Aorta (tissue), 5 donors: ENCODE measurements at regions of chr9 and their contacts with region 1.

Region 1: DNA sequence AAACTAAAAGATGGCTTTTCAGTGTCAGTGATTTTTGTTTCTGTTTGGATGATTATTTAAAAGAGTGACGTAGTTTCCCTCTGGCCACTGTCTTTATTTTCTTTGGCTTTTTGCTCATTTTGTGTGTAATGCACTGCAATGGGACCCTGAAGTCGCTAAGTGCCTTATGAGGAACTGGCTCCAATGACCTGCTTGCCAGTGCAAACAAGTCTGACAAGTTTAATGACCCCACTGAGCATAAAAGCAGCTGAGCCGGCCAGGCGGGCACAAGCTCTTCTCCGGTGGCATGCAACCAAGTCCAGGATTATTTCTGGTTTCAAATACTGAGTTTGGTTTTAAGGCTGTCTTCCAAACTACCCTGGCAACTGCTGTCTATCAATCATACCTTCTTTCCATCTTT is 15.6 kb upstream of the GNA14 start:
- DNase-seq: peak in 1 of 2 donors; percentile 59
- ATAC-seq: peak; percentile 85
- H3K4me3 ChIP-seq: no peak overlapping the region
- H3K27ac ChIP-seq: peak overlapping the region in 1 of 2 donors; percentile 34
- H3K4me1 ChIP-seq: peaks cover 0 to 5% of the 10 kb centered on the region in 2 donors
- H3K27me3 ChIP-seq: no peaks in the 10 kb centered on the region

Region 2: GRCh38 chr9:77712533-77713130 is 48.9 kb after region 1 on chr9:
- intact Hi-C with region 1: loop called in 1 of 2 experiments (anchors 5 kb)
- DNase-seq: no peak
- ATAC-seq: no peak
- H3K4me3 ChIP-seq: no peak overlapping the region
- H3K27ac ChIP-seq: peak overlapping the region in 1 of 2 donors; percentile 4
- H3K4me1 ChIP-seq: peaks cover 0 to 3% of the 10 kb centered on the region in 2 donors
- H3K27me3 ChIP-seq: no peaks in the 10 kb centered on the region

Region 3: DNA sequence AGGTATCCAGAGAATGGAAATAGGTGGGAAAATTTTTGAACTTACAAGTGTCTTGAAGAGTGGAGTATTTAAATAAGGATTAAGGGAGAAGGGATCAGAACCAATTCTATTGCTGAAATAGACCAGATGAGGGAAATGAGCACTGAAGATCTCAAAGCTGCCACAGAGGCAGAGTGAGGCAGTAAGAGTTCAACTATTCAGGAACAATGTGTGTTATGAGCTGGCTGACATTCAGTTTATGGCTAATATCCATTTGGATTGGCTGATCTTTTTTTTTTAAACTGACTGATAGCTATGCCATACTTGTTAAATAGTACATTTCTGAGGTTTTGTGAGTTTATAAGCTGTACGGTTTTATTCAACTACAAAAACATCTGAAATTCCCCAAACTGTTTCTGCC is 79.6 kb after region 1 on chr9:
- intact Hi-C with region 1: loop called in 1 of 2 experiments (anchors 10 kb)
- DNase-seq: no peak
- ATAC-seq: no peak
- H3K4me3 ChIP-seq: no peak overlapping the region
- H3K27ac ChIP-seq: no peak overlapping the region
- H3K4me1 ChIP-seq: peaks cover 2 to 3% of the 10 kb centered on the region in 2 donors
- H3K27me3 ChIP-seq: no peaks in the 10 kb centered on the region

Region 4: GRCh38 chr9:77751341-77752091 is 87.8 kb after region 1 on chr9:
- intact Hi-C with region 1: loop called (anchors 10 kb)
- DNase-seq: no peak
- ATAC-seq: peak; percentile 81
- H3K4me3 ChIP-seq: no peak overlapping the region
- H3K27ac ChIP-seq: peak overlapping the region in 1 of 2 donors; percentile 43
- H3K4me1 ChIP-seq: no peaks in the 10 kb centered on the region
- H3K27me3 ChIP-seq: no peaks in the 10 kb centered on the region